PC-3 (cell line): ENCODE measurements at regions of chr3 and their contacts with region 1.

Region 1: GRCh38 chr3:149717391-149718056 is 34.8 kb downstream of the COMMD2 start:
- DNase-seq: peak; percentile 88
- ATAC-seq: peak; percentile 83
- H3K4me3 ChIP-seq: no peak overlapping the region
- H3K27ac ChIP-seq: no peak overlapping the region
- H3K4me1 ChIP-seq: peaks cover 5% of the 10 kb centered on the region; the same call in 1 of the 2 replicates
- H3K27me3 ChIP-seq: no peaks in the 10 kb centered on the region
- CTCF ChIP-seq: peak; percentile 89

Region 2: DNA sequence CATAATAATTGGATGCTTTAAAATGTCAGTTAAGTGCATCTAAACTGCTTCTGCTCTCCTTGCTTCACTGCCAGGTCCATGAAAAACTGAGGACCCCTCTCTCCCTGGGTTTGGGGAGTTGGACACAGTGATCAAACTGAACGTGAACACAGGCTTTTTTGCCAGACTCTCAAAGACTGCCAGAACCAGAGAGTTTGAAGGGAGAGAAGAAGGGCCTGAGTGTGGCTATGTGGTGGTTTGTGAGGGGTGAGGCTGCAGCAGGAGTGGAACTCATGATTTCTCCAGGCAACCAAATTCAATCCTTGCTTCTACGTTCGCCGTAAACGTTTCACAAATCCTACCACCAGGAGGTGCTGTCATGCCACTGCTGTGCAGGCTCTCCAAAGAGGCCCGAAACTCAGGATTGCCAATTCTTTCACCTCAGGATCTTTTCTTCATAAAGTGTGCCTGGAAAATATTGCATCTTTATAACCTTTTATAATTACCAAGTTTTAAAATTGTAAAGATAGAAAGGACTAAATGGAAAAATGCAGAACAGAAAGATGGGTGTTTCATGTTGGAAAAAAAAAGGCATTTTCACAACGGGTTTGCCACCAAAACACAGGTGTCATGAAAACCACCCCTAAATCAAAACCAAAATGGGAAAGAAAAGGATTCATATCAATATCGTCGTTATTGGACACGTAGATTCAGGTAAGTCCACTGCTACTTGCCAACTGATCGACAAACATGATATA is 223.3 kb before region 1 on chr3:
- CTCF ChIA-PET with region 1: no interaction called
- POLR2A ChIA-PET with region 1: no interaction called
- intact Hi-C with region 1: loop called (anchors 1 kb)
- DNase-seq: peak; percentile 81
- ATAC-seq: peak; percentile 71
- H3K4me3 ChIP-seq: no peak overlapping the region
- H3K27ac ChIP-seq: no peak overlapping the region
- H3K4me1 ChIP-seq: peaks cover 9% of the 10 kb centered on the region
- H3K27me3 ChIP-seq: no peaks in the 10 kb centered on the region
- CTCF ChIP-seq: peak; percentile 87

Region 3: DNA sequence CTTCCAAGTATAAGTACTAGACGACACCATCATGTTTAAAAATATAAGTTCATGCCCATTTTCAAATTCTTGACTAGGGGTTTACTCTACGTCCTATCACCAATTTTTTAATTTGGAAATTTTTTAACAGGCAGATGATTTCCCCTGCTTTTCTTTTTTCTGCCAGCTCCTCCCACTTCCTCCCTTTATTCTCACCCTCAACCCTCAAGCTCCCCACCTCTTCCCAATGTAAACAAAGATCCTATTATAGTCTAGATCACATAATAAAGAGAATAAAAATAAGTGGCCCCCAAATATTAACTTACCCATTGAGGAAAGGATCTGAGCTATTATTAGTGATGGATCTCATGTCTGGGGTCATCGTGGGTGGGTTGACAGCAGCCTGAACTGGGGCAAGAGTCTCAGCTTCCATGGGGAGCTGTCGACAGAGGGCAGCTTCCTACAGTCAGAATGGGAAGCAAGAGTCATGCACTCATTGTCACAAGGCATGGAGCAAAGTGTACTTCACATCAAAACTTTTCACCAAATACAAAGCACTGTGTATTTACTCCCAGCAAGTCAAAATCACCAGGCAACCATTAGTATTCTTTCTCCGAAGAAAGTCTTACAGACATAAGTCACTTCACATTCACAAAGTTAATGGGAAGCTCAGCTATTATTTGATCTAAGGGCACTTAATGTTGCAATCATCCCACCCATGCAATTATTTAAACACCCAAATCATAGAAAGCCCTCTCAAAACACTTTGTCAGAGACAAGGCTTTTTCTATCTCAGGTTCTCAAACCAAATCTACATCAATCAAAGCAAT is 189.8 kb before region 1 on chr3:
- CTCF ChIA-PET with region 1: no interaction called
- POLR2A ChIA-PET with region 1: no interaction called
- intact Hi-C with region 1: loop called (anchors 1 kb)
- DNase-seq: no peak
- ATAC-seq: no peak
- H3K4me3 ChIP-seq: no peak overlapping the region
- H3K27ac ChIP-seq: no peak overlapping the region
- H3K4me1 ChIP-seq: no peaks in the 10 kb centered on the region
- H3K27me3 ChIP-seq: no peaks in the 10 kb centered on the region
- CTCF ChIP-seq: no peak